ENCODE measurements at regions of chr18 and their contacts with region 1.

Region 1: GRCh38 chr18:77067291-77068061 is 65.1 kb downstream of the MBP start:
- DNase-seq: peak; percentile 89
- H3K4me3 ChIP-seq: no peak overlapping the region
- H3K27ac ChIP-seq: peak overlapping the region; percentile 81
- H3K4me1 ChIP-seq: peaks cover 78% of the 10 kb centered on the region
- H3K27me3 ChIP-seq: no peaks in the 10 kb centered on the region
- CTCF ChIP-seq: no peak

Region 2: GRCh38 chr18:76875390-76876325 is 191.8 kb before region 1 on chr18:
- CTCF ChIA-PET with region 1: no interaction called
- dilution Hi-C with region 1: no loop called
- in situ Hi-C with region 1: no loop called
- intact Hi-C with region 1: loop called (anchors 10 kb)
- DNase-seq: peak; percentile 20
- H3K4me3 ChIP-seq: no peak overlapping the region
- H3K27ac ChIP-seq: no peak overlapping the region
- H3K4me1 ChIP-seq: no peaks in the 10 kb centered on the region
- H3K27me3 ChIP-seq: no peaks in the 10 kb centered on the region
- CTCF ChIP-seq: peak; percentile 60 to 64

Region 3: GRCh38 chr18:77087393-77088141 is 20.1 kb after region 1 on chr18:
- CTCF ChIA-PET with region 1: interaction called, 6 read pairs
- dilution Hi-C with region 1: no loop called
- in situ Hi-C with region 1: no loop called
- intact Hi-C with region 1: loop called (anchors 1 kb)
- DNase-seq: no peak
- H3K4me3 ChIP-seq: peak overlapping the region in 1 of 3 experiments; percentile 17
- H3K27ac ChIP-seq: peak overlapping the region; percentile 44
- H3K4me1 ChIP-seq: peaks cover 50% of the 10 kb centered on the region
- H3K27me3 ChIP-seq: no peaks in the 10 kb centered on the region
- CTCF ChIP-seq: no peak

Region 4: DNA sequence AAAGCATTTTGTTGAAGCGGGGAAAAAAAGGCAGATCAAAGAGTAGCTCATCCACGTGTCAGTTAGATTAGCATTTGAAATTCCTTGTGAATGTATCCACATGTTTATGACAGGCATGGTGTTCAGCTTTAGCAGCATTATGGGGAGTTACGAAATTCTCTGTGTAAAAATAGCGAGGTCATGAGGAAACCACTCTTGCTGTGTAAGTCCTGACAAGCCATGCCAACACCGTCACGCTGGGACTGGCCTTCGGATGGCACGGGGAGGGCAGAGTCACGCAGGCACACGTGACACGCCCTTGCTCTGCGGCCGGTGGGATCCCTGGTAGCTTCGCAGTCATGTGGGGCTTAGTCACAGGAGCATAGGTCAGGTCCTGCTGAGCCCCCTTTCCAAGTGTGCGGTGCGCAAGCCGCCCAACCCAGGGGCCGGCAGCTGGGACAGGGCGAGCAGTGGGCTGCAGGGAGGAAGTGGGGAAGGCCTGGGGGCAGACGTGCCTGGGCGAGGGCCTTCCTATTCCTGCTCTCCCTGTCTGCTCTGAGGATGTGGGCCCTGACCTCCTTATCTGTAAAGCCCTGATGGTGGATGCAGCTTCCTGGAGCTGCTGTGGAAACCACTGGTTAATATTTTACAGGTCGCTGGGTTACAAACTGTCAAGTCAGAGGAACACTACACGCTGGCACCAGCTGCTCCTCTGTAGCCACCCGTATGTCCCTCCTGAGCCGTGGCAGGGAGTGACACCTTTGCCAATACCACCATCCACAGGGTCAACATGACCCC is 47.1 kb after region 1 on chr18:
- CTCF ChIA-PET with region 1: no interaction called
- dilution Hi-C with region 1: loop called (anchors 5 kb)
- in situ Hi-C with region 1: no loop called
- intact Hi-C with region 1: loop called (anchors 1 kb)
- DNase-seq: peak; percentile 99
- H3K4me3 ChIP-seq: no peak overlapping the region
- H3K27ac ChIP-seq: peak overlapping the region; percentile 87
- H3K4me1 ChIP-seq: peaks cover 37% of the 10 kb centered on the region
- H3K27me3 ChIP-seq: no peaks in the 10 kb centered on the region
- CTCF ChIP-seq: no peak

Region 5: GRCh38 chr18:77157312-77157711 is 89.8 kb after region 1 on chr18:
- CTCF ChIA-PET with region 1: no interaction called
- dilution Hi-C with region 1: loop called (anchors 5 kb)
- in situ Hi-C with region 1: no loop called
- intact Hi-C with region 1: no loop called
- DNase-seq: no peak
- H3K4me3 ChIP-seq: no peak overlapping the region
- H3K27ac ChIP-seq: no peak overlapping the region
- H3K4me1 ChIP-seq: peaks cover 6% of the 10 kb centered on the region
- H3K27me3 ChIP-seq: no peaks in the 10 kb centered on the region
- CTCF ChIP-seq: no peak

Measured in mammary epithelial cell (primary cell).